GM12878 (cell line): ENCODE measurements at regions of chr1 and their contacts with region 1.

Region 1: DNA sequence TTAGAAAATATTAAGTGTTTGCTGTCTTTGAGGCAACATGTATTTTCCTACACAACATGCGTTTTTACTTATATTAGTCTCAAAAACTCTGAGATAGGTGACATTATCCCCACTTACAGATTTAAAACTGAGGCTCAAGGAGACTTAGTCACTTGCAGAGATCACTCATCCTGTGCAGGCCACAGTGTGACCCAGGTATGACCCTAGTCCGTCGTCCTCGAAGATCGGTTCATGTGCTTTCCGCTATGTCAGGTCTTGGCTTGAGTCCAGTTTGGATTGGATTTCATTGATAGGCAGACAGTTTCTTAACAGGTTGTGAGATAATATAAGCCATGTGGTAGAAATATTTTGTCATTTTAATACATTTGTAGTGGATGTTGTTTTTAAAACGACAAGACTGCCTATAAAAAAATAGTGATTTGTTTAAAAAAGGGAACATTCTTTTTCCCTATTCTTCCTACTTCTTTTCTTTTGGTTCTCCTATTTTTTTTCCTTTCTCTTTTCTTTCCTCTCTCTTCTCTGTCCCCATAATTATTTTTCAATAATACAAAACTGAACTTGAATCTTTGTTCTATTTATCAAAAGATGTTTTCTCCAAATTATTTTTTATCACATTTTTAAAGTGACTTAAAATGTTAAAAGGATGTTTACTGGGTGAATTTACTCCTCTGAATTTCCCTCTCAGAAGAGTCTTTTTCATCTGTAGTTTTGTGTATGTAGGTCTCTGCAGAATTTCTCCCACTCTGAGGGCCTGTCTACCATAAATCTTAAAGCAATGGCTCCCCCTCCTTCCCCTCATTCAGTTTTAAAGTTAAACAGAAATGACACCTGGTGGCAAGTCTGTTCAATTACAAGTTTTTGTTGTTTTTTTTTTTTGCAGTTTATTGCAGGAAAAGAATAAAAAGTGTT is 81.8 kb downstream of the PHTF1 start:
- DNase-seq: no peak
- ATAC-seq: peak; percentile 74; the same call in 2 of the 3 replicates
- H3K4me3 ChIP-seq: no peak overlapping the region
- H3K27ac ChIP-seq: no peak overlapping the region
- H3K4me1 ChIP-seq: no peaks in the 10 kb centered on the region
- H3K27me3 ChIP-seq: no peaks in the 10 kb centered on the region
- CTCF ChIP-seq: peak; percentile 36 to 52 (median 42); a peak in 5 of 6 replicates
- EP300 ChIP-seq: no peak
- POLR2A ChIP-seq: no peak
- RAD21 ChIP-seq: peak; percentile 81

Region 2: GRCh38 chr1:113101588-113101987 is 575.9 kb before region 1 on chr1:
- CTCF ChIA-PET with region 1: no interaction called
- POLR2A ChIA-PET with region 1: no interaction called
- RAD21 ChIA-PET with region 1: no interaction called
- SMC1A ChIA-PET with region 1: no interaction called
- in situ Hi-C with region 1: no loop called
- intact Hi-C with region 1: no loop called
- DNase-seq: no peak
- ATAC-seq: no peak
- H3K4me3 ChIP-seq: no peak overlapping the region
- H3K27ac ChIP-seq: no peak overlapping the region
- H3K4me1 ChIP-seq: no peaks in the 10 kb centered on the region
- H3K27me3 ChIP-seq: no peaks in the 10 kb centered on the region
- CTCF ChIP-seq: no peak
- EP300 ChIP-seq: no peak
- POLR2A ChIP-seq: no peak
- RAD21 ChIP-seq: no peak

Region 3: DNA sequence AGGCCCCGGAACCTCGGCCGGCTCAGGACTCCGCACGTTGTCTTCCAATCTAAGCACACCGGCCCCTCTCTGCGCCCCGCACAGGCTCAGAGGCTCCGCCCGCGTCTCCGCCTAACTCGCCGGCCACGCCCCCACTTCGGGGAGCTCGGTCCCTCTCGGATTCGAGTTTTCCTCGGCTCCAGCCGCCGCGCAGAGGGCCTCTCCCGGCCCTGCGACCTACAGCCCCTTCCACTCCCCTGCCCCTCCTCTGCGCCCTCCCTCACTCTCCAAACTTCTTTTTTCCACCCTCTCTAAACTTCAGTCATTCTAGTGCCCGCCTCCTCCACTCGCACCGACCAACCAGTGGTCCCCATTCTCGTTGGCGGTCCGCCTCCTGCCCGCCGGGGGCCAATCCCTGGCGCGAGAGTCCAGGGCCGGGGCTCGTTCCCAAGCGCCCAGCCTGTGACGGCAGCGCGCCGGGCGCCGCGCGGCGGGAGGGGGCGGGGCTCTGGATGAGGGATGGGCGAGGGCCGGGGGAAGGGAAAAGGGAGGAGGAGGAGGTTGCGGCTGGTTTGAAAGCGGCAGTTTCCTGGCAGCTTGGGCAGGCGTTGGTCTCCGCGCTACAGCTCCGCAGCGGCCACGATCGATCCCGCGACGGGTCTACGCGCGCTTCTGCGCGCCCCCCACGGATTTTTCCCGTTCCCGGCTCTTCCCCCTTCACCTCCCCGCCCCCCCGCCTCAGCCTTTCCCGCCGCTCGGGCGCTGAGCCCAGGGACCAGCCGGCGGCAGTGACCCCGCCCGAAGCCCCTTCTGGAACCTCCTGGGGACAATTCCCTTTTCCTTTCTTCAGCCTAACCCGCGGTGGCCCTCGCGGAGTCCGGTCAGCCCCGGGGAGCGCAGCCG is 287.3 kb before region 1 on chr1 and contains the start of gene MAGI3:
- CTCF ChIA-PET with region 1: no interaction called
- POLR2A ChIA-PET with region 1: no interaction called
- RAD21 ChIA-PET with region 1: no interaction called
- SMC1A ChIA-PET with region 1: no interaction called
- in situ Hi-C with region 1: no loop called
- intact Hi-C with region 1: loop called (anchors 2 kb)
- DNase-seq: peak; percentile 68
- ATAC-seq: peak; percentile 99
- H3K4me3 ChIP-seq: peak within 1 kb of the TSS; percentile 68
- H3K27ac ChIP-seq: no peak within 1 kb of the TSS
- H3K4me1 ChIP-seq: peaks cover 2% of the 10 kb centered on the region; the same call in 1 of the 2 replicates
- H3K27me3 ChIP-seq: peaks cover 0 to 10% of the 10 kb centered on the region in 2 experiments; a peak in 2 of 4 replicates
- CTCF ChIP-seq: no peak
- EP300 ChIP-seq: no peak
- POLR2A ChIP-seq: peak; percentile 59
- RAD21 ChIP-seq: no peak
- polyA plus RNA-seq, gene MAGI3: 0.24 to 0.29 TPM